WTC11 (cell line): ENCODE measurements at regions of chr2 and their contacts with region 1.

Region 1: GRCh38 chr2:84925724-84926376 is 20.4 kb downstream of the TMSB10 start:
- DNase-seq: peak; percentile 99
- ATAC-seq: peak; percentile 86
- H3K4me3 Mint-ChIP-seq: peak overlapping the region; percentile 69
- H3K27ac Mint-ChIP-seq: no peak overlapping the region
- H3K4me1 Mint-ChIP-seq: peaks cover 23% of the 10 kb centered on the region
- H3K27me3 Mint-ChIP-seq: peaks cover 12% of the 10 kb centered on the region
- CTCF ChIP-seq: peak; percentile 99

Region 2: GRCh38 chr2:84749442-84749841 is 176.4 kb before region 1 on chr2:
- CTCF ChIA-PET with region 1: no interaction called
- POLR2A ChIA-PET with region 1: no interaction called
- DNase-seq: no peak
- ATAC-seq: no peak
- H3K4me3 Mint-ChIP-seq: no peak overlapping the region
- H3K27ac Mint-ChIP-seq: no peak overlapping the region
- H3K4me1 Mint-ChIP-seq: peaks cover 15% of the 10 kb centered on the region
- H3K27me3 Mint-ChIP-seq: no peaks in the 10 kb centered on the region
- CTCF ChIP-seq: no peak

Region 3: GRCh38 chr2:84800194-84800805 is 125.5 kb before region 1 on chr2:
- CTCF ChIA-PET with region 1: no interaction called
- POLR2A ChIA-PET with region 1: no interaction called
- DNase-seq: no peak
- ATAC-seq: peak; percentile 46; the same call in 1 of the 2 replicates
- H3K4me3 Mint-ChIP-seq: no peak overlapping the region; the same call in 1 of the 2 replicates
- H3K27ac Mint-ChIP-seq: peak overlapping the region; percentile 2; the same call in 1 of the 2 replicates
- H3K4me1 Mint-ChIP-seq: peaks cover 21% of the 10 kb centered on the region
- H3K27me3 Mint-ChIP-seq: peaks cover 5% of the 10 kb centered on the region; the same call in 1 of the 2 replicates
- CTCF ChIP-seq: no peak

Region 4: GRCh38 chr2:84856787-84857186 is 69.1 kb before region 1 on chr2:
- CTCF ChIA-PET with region 1: interaction called, 18 read pairs
- POLR2A ChIA-PET with region 1: no interaction called
- DNase-seq: no peak
- ATAC-seq: no peak
- H3K4me3 Mint-ChIP-seq: no peak overlapping the region
- H3K27ac Mint-ChIP-seq: no peak overlapping the region
- H3K4me1 Mint-ChIP-seq: peaks cover 30% of the 10 kb centered on the region
- H3K27me3 Mint-ChIP-seq: peaks cover 56% of the 10 kb centered on the region
- CTCF ChIP-seq: no peak

Region 5: GRCh38 chr2:84894758-84895520 is 30.9 kb before region 1 on chr2:
- CTCF ChIA-PET with region 1: interaction called, 12 read pairs
- POLR2A ChIA-PET with region 1: no interaction called
- DNase-seq: no peak
- ATAC-seq: no peak
- H3K4me3 Mint-ChIP-seq: no peak overlapping the region
- H3K27ac Mint-ChIP-seq: no peak overlapping the region
- H3K4me1 Mint-ChIP-seq: peaks cover 11% of the 10 kb centered on the region
- H3K27me3 Mint-ChIP-seq: no peaks in the 10 kb centered on the region; the same call in 1 of the 2 replicates
- CTCF ChIP-seq: no peak

Region 6: DNA sequence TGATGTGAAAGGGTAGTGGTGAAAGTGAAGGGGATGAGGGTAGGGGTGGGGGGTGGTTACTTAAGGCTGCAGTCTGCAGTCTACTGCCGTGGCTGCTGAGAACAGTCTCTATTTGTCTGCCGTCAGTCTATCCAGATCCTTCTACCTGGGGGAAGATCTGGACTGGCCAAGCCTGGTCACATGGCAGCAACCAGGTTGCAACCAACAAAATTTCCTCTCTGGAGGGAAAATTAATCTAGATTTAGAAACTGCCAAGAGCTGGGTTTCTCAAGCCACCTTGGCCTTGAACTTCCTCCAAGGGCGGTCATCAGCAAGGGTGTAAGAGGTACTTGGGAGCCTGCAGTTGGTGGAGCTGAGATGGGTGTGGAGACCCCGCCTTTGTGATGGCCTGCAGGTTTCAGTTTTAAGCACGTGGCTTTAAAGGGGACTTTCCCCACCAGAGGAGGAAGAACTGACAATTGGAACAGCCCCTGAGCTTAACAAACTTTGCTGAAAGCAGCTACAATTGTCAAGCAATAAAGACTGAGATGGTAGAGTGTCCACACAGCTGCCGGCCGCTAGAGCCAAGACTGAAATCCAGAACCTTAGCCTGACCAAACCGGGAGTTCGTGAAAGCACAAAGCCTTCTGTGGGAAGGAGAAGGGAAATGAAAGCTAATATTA is 13.7 kb after region 1 on chr2:
- CTCF ChIA-PET with region 1: interaction called, 43 read pairs
- POLR2A ChIA-PET with region 1: interaction called, 3 read pairs
- DNase-seq: no peak
- ATAC-seq: peak; percentile 37
- H3K4me3 Mint-ChIP-seq: no peak overlapping the region
- H3K27ac Mint-ChIP-seq: peak overlapping the region; percentile 86; the same call in 1 of the 2 replicates
- H3K4me1 Mint-ChIP-seq: peaks cover 26% of the 10 kb centered on the region
- H3K27me3 Mint-ChIP-seq: no peaks in the 10 kb centered on the region; the same call in 1 of the 2 replicates
- CTCF ChIP-seq: no peak

Region 7: DNA sequence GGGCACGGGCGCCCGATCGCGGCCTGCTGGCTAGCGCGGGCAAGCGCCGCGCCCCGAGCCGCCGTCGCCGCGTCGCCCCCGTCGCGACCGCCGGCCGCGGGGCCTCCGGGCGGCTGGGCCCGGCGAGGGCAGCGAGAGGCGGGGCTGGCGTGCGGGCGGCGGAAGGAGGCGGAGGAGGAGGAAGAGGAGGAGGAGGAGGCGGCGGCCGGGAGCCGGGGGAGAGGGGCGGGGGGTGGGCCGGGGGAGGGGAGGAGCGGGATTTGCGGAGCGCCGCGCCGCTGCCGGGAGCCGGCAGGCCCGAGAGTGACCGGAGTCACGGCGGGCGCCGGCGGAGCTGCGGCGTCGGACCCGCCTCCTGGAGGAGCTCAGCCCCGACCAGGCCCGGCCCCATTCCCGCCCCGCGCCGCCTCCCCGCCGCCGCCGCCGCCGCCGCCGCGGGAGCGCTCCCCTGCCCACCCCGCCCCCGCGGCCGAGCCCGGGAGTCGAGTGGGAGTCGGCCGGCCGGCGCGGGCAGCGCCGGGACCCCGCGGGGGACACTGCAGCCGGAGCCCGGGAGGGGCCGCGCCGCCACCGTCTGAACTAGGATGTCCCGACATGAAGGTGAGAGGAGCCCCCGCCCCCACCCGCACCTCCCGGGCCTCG is 45.1 kb after region 1 on chr2 and contains the start of gene KCMF1:
- CTCF ChIA-PET with region 1: interaction called, 32 read pairs
- POLR2A ChIA-PET with region 1: interaction called, 13 read pairs
- DNase-seq: peak; percentile 74
- ATAC-seq: peak; percentile 66
- H3K4me3 Mint-ChIP-seq: peak within 1 kb of the TSS; percentile 99
- H3K27ac Mint-ChIP-seq: peak within 1 kb of the TSS; percentile 100
- H3K4me1 Mint-ChIP-seq: peaks cover 55% of the 10 kb centered on the region
- H3K27me3 Mint-ChIP-seq: no peaks in the 10 kb centered on the region
- CTCF ChIP-seq: no peak
- total RNA-seq, gene KCMF1: 114 to 118 TPM (median 117 TPM) in 3 replicates

Region 8: GRCh38 chr2:85033388-85033787 is 107.5 kb after region 1 on chr2:
- CTCF ChIA-PET with region 1: interaction called, 15 read pairs
- POLR2A ChIA-PET with region 1: no interaction called
- DNase-seq: no peak
- ATAC-seq: no peak
- H3K4me3 Mint-ChIP-seq: no peak overlapping the region
- H3K27ac Mint-ChIP-seq: no peak overlapping the region
- H3K4me1 Mint-ChIP-seq: peaks cover 7% of the 10 kb centered on the region
- H3K27me3 Mint-ChIP-seq: no peaks in the 10 kb centered on the region
- CTCF ChIP-seq: no peak

Region 9: DNA sequence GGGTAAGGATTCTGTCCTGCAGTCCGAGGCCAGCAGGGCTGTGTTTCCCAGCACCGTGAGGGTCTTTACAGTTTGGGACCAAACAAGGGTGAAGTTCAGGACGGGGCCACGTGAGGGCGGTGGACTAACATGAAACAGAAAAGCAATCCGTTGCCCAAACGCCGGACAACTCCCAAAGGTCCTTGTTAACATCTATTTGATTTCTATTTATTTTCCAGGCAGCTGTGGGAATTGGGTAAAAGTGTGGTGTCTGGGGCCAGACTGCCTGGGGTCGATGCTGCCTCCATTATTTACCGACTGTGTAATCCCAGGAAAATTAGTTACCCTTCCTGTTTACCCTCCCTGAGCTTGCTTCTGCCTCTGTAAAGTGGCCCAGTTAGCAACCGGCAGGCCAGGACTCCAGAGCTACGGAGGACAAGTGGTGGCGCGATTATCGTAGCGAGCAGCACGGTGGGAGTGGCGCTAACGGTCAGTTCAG is 141.1 kb after region 1 on chr2:
- CTCF ChIA-PET with region 1: interaction called, 26 read pairs
- POLR2A ChIA-PET with region 1: no interaction called
- DNase-seq: peak; percentile 93
- ATAC-seq: peak; percentile 86
- H3K4me3 Mint-ChIP-seq: peak overlapping the region; percentile 55
- H3K27ac Mint-ChIP-seq: no peak overlapping the region
- H3K4me1 Mint-ChIP-seq: peaks cover 25% of the 10 kb centered on the region
- H3K27me3 Mint-ChIP-seq: peaks cover 30% of the 10 kb centered on the region
- CTCF ChIP-seq: peak; percentile 66